MCF 10A (cell line): ENCODE measurements at regions of chr4 and their contacts with region 1.

Region 1: DNA sequence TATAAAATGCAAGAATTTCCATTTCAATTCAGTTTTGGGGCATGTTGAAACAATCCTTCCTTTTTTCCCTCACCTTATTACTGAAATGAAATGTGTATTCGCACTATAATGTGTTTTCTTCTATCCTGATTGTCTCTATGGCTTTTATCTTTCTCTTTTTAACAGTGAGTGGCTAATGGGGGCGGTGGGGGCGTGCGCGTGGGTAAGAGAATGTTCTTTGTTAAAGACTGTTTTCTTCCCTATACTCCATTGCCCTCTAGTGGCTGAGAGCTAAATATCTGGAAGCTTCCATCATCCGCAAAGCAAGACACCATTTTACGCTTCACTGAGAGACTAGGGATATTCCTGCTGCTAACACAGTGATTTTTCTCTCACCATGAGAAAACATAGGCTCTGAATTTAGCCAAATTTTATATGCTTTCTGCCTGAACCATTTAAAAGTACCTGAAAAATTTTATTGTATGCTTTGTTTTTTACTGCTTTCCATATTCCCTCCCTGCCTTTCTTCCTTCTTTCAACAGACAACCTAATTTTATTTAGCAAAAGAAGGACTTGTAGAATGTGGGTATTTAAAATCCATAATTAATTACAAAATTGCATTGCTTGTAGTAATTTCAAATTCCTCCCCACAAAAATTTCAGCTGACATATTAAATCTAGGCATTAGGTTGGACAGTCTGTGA is 194.0 kb downstream of the GASK1B start:
- DNase-seq: peak; percentile 68
- H3K4me3 Mint-ChIP-seq: peak overlapping the region; percentile 48
- H3K27ac Mint-ChIP-seq: no peak overlapping the region
- H3K4me1 Mint-ChIP-seq: peaks cover 15% of the 10 kb centered on the region
- H3K27me3 Mint-ChIP-seq: no peaks in the 10 kb centered on the region
- CTCF ChIP-seq: peak; percentile 84

Region 2: GRCh38 chr4:157052429-157053040 is 926.3 kb before region 1 on chr4:
- CTCF ChIA-PET with region 1: no interaction called
- POLR2A ChIA-PET with region 1: no interaction called
- intact Hi-C with region 1: loop called (anchors 10 kb)
- DNase-seq: no peak
- H3K4me3 Mint-ChIP-seq: no peak overlapping the region
- H3K27ac Mint-ChIP-seq: no peak overlapping the region
- H3K4me1 Mint-ChIP-seq: peaks cover 6% of the 10 kb centered on the region
- H3K27me3 Mint-ChIP-seq: no peaks in the 10 kb centered on the region
- CTCF ChIP-seq: no peak

Region 3: DNA sequence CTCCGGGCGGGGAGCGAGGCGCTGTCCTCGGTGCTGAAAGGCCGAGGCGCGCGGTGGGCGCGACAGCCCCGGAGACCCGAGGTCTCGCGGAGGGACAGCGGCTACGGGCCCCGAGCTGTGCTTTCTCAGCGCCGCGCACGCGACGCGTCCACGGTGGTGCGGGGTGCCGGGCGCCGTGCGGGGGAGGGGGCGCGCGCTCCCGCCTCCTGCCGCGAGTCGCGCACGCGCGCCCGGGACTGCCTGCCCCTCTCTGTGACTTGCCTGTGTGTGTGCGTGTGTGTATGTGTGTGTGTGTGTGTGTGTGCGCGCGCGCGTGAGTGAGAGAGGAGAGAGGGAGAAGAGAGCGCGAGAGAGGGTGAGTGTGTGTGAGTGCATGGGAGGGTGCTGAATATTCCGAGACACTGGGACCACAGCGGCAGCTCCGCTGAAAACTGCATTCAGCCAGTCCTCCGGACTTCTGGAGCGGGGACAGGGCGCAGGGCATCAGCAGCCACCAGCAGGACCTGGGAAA is 758.4 kb before region 1 on chr4 and contains the start of gene GRIA2:
- CTCF ChIA-PET with region 1: interaction called, 25 read pairs
- POLR2A ChIA-PET with region 1: interaction called, 3 read pairs
- intact Hi-C with region 1: loop called (anchors 1 kb)
- DNase-seq: no peak
- H3K4me3 Mint-ChIP-seq: peak within 1 kb of the TSS; percentile 61
- H3K27ac Mint-ChIP-seq: no peak within 1 kb of the TSS
- H3K4me1 Mint-ChIP-seq: peaks cover 5% of the 10 kb centered on the region
- H3K27me3 Mint-ChIP-seq: peaks cover 32% of the 10 kb centered on the region
- CTCF ChIP-seq: no peak
- total RNA-seq, gene GRIA2: not detected in 2 replicates

Region 4: DNA sequence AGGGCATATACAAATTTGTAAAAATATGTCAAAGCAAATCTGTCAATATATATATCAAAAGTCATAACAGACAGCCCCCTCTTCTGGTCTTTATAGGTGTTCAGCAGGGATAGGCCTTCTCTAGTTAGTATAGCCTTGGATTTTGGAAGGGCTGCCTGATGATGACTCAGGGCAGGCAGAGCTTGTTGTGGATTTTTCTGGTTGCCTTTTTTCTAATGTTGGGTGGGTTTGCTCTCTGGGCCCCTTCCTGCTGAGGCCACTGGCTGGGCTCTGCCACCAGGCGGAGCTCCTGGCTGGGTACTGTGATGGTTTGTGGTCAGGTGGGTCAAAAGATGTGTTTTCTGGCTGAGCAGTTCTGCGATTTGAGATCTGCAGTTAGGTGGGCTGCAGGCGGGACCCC is 464.1 kb before region 1 on chr4:
- CTCF ChIA-PET with region 1: no interaction called
- POLR2A ChIA-PET with region 1: no interaction called
- intact Hi-C with region 1: loop called (anchors 10 kb)
- DNase-seq: peak; percentile 13
- H3K4me3 Mint-ChIP-seq: no peak overlapping the region
- H3K27ac Mint-ChIP-seq: no peak overlapping the region
- H3K4me1 Mint-ChIP-seq: no peaks in the 10 kb centered on the region
- H3K27me3 Mint-ChIP-seq: no peaks in the 10 kb centered on the region
- CTCF ChIP-seq: peak; percentile 24